Motor neuron (in vitro differentiated cells): ENCODE measurements at regions of chr6 and their contacts with region 1.

Region 1: DNA sequence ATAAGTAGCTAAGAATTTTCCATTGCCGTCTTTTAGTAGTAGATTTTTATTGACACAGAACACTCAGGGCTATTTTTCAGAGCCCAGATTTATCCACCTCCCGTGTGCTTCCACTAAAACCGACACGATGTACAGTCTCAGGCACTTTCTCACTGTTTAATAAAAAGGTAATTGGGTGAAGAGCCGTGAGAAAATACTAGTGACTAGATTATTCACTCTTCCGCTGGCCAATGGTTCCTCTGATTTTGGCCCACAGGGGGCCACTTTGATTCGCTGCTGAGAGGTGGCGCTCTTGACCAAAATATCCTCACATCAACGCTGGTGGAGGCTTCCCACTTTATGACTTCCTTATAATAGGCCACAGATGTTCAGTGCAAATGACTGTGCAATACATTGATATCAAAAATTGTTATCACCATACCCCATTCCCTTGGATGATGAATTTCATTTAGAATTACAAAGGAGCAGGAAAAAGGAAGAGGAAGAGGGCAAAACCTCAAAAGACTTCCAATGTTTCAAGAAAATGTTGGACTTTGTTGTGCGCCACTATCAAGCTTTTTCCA is 12.3 kb upstream of the HDDC2 start:
- ATAC-seq: peak; percentile 74 to 95 (median 86)
- H3K4me3 ChIP-seq: no peak overlapping the region
- H3K27ac ChIP-seq: no peak overlapping the region
- H3K4me1 ChIP-seq: peaks cover 7 to 17% of the 10 kb centered on the region in 2 donors

Region 2: GRCh38 chr6:125123788-125124777 is 190.0 kb before region 1 on chr6:
- in situ Hi-C with region 1: no loop called
- ATAC-seq: peak in 5 of 8 experiments; percentile 19 to 92 (median 85)
- H3K4me3 ChIP-seq: no peak overlapping the region
- H3K27ac ChIP-seq: no peak overlapping the region
- H3K4me1 ChIP-seq: no peaks in the 10 kb centered on the region

Region 3: DNA sequence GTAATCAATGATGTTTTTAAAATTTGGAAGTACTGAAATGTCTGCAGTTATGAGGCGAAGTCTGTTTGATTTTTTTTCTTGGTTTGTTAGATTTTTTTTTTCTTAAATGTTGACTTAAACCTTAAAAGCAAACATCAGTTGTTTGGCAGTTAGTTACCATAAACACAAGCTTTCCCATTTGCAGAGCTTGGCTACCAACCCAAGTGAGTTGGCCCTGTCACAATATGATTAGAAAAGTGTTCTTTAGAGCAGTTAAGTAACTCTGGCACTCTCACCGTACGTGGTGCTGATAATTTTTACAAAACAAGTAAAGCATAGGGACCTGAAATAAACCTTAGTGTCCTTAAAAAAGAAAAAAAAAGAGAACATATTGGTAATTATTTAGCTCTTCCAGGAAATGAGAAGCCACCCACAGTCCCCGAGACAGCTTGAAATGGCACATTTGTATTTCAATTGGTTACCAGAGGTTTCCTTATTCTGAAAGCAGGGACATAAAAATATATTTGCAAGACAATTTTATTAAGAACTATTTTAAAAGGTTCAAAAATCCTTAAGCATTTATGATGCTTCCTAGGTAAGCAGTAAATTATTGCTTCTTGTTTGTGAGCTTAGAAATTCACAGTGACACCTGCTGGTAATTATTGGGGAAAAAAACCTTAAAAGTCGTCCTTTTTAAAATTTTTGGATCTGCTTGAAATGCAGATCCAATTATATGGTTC is 439.3 kb after region 1 on chr6:
- in situ Hi-C with region 1: loop called in 2 of 9 experiments (anchors 10 kb)
- ATAC-seq: no peak
- H3K4me3 ChIP-seq: no peak overlapping the region
- H3K27ac ChIP-seq: no peak overlapping the region
- H3K4me1 ChIP-seq: peaks cover 8 to 15% of the 10 kb centered on the region in 2 donors

Region 4: DNA sequence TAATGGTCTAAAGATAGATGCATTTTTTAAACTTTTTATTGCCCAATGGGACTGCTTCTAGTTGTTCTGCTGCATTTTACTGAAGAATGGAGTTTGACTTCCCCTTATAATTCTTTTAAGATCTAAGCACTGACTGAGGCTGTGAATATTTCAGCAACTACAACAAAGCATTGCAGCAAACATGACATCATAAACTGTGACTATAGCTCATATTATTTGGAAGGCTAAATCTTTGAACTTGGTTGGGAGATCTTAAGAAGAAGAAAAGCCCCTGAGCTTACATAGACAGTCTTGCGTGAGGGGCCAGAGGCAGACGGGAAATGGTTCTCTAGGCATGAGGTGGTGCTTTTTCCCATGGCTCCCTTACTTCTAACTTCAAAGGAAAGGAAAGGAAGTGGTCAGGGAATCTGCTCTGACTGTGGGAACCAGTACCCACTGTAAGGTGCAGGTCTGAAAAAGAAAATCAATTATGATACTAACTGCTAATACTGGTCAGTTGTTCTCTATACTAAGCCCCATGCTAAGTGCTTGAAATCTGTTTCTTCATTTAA is 450.1 kb after region 1 on chr6:
- in situ Hi-C with region 1: loop called (anchors 5 to 10 kb)
- ATAC-seq: no peak
- H3K4me3 ChIP-seq: no peak overlapping the region
- H3K27ac ChIP-seq: no peak overlapping the region
- H3K4me1 ChIP-seq: peaks cover 4 to 6% of the 10 kb centered on the region in 2 donors

Region 5: DNA sequence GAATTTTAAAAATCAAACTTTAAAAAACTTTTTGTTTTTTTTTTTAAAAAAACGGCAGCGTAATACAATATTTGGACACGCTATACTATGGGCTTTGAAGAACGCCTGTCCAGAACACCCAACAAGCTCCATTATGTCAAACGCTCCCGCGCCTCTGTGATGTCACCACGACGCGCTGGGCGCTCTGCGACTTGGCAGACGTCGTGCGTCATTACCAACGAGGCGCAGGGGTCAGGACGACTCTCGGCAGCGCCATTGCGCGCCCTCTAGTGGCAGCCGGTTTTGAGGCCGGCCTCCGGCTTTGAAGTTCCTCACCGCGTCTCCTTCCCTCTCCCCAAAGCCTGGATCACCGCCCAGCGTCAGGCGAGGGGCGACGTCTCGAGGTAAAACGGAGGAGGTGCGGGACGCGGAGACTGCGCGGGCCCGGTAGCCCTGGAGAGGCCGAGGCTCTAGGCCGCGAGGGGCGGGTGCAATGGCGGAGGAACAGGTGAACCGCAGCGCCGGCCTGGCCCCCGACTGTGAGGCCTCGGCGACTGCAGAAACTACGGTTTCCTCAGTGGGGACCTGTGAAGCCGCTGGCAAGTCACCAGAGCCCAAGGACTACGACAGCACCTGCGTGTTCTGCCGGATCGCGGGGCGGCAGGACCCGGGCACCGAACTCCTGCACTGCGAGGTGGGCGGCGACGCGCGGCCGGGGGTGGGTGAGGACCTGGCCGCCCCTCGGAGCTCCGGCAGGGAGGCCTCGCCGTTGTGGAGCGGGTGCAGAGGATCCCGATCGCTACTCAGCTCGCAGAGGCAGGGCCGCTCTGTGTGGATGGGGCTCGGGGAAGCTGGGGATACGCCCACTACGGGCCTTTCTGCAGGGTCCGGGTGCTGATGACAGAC is 642.6 kb after region 1 on chr6 and contains the start of gene HINT3:
- in situ Hi-C with region 1: loop called in 5 of 9 experiments (anchors 10 to 25 kb)
- ATAC-seq: peak; percentile 87 to 93 (median 90)
- H3K4me3 ChIP-seq: peak within 1 kb of the TSS; percentile 63 to 82 (median 73)
- H3K27ac ChIP-seq: peak within 1 kb of the TSS; percentile 83 to 94
- H3K4me1 ChIP-seq: peaks cover 0 to 15% of the 10 kb centered on the region in 2 donors
- total RNA-seq, gene HINT3: 13.3 to 49.6 (median 30.3) TPM

Region 6: GRCh38 chr6:125986300-125987025 is 672.4 kb after region 1 on chr6 and contains the start of gene TRMT11:
- in situ Hi-C with region 1: loop called in 1 of 9 experiments (anchors 25 kb)
- ATAC-seq: peak; percentile 93 to 99 (median 98)
- H3K4me3 ChIP-seq: peak within 1 kb of the TSS; percentile 56 to 88 (median 70)
- H3K27ac ChIP-seq: peak within 1 kb of the TSS; percentile 53 to 71
- H3K4me1 ChIP-seq: peaks cover 12 to 17% of the 10 kb centered on the region in 2 donors
- total RNA-seq, gene TRMT11: 29.0 to 60.3 (median 39.0) TPM